ENCODE measurements at regions of chr7 and their contacts with region 1.

Region 1: DNA sequence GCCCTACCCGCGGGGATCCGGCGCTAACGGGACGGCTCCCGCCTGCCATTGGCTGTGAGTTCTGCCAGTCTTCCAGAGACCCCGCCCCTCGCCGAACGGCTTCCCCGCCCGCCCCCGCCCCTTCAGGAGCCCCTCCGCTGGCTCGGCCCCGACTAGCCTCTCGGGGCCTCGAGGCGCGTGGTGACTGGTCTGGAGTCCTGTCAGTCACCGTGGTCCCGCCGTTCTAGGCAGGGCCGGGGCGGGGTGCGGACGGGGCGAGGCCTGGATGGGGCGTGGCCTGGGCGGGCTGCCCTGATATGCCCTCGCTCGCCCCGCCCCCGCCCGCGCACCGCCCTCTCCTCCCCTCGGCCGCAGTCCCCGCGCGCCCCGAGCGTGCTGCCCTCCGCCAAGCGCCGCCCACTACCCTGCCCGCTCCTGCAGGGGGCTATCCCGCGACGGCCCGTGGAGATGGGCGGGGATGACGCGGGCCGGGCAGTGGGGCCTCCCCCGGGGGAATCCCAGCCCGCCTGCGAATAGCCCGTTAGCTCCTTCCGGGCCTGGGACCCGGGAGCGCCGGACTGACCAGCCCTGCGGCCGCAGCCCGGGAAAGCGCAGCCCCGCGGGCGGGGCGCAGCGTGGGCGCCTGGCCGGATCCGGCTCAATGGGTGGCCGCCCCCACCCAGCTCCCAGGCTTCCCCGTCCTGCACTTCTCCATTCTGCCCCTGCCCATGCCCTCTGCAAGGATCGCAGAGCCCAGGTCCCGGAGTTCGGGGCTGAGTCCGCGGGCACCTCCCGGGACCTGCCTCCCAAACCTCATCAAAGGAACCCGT is 450 bp upstream of the HIP1 start:
- DNase-seq: peak; percentile 100
- ATAC-seq: peak; percentile 98
- H3K4me3 Mint-ChIP-seq: peak overlapping the region; percentile 95
- H3K27ac Mint-ChIP-seq: peak overlapping the region; percentile 95
- H3K4me1 Mint-ChIP-seq: peaks cover 27% of the 10 kb centered on the region
- H3K27me3 Mint-ChIP-seq: peaks cover 32% of the 10 kb centered on the region
- CTCF ChIP-seq: no peak

Region 2: DNA sequence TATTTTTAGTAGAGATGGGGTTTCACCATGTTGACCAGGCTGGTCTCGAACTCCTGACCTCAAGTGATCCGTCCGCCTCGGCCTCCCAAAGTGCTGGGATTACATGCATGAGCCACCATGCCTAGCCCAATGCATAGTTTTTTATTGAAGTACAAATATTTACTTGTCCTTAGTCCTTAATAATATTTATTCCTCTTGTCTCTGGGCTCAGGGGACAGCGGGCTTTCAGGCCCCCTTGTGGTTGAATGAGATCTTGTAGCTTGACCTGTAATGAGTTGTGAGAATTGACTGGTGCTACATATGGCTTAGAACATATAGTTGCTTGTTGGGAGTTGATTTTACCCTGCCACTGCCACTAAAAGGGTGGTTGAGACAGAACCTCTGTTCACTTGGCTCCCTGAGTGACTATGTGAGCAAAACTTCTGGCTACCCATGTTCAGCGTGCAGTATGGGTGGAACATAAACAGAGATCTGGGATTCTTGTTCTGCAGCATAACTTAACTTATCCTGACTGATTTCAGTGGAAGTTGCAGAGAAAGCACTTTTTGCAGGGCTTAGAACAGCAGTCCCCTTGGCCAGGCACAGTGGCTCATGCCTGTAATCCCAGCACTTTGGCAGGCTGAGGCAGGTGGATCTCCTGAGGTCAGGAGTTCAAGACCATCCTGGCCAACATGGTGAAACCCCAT is 17.9 kb after region 1 on chr7:
- CTCF ChIA-PET with region 1: interaction called, 19 read pairs
- POLR2A ChIA-PET with region 1: no interaction called
- DNase-seq: peak; percentile 39
- ATAC-seq: peak; percentile 71
- H3K4me3 Mint-ChIP-seq: no peak overlapping the region
- H3K27ac Mint-ChIP-seq: no peak overlapping the region
- H3K4me1 Mint-ChIP-seq: no peaks in the 10 kb centered on the region; the same call in 1 of the 2 replicates
- H3K27me3 Mint-ChIP-seq: no peaks in the 10 kb centered on the region; the same call in 1 of the 2 replicates
- CTCF ChIP-seq: peak; percentile 45; the same call in 1 of the 2 replicates

Region 3: GRCh38 chr7:75762314-75762917 is 23.2 kb after region 1 on chr7:
- CTCF ChIA-PET with region 1: interaction called, 19 read pairs
- POLR2A ChIA-PET with region 1: no interaction called
- DNase-seq: no peak
- ATAC-seq: peak; percentile 95
- H3K4me3 Mint-ChIP-seq: no peak overlapping the region
- H3K27ac Mint-ChIP-seq: peak overlapping the region; percentile 22; the same call in 1 of the 2 replicates
- H3K4me1 Mint-ChIP-seq: peaks cover 2% of the 10 kb centered on the region
- H3K27me3 Mint-ChIP-seq: no peaks in the 10 kb centered on the region; the same call in 1 of the 2 replicates
- CTCF ChIP-seq: peak; percentile 40; the same call in 1 of the 2 replicates

Measured in WTC11 (cell line).